GM10248 (cell line): ENCODE measurements at regions of chr17 and their contacts with region 1.

Region 1: DNA sequence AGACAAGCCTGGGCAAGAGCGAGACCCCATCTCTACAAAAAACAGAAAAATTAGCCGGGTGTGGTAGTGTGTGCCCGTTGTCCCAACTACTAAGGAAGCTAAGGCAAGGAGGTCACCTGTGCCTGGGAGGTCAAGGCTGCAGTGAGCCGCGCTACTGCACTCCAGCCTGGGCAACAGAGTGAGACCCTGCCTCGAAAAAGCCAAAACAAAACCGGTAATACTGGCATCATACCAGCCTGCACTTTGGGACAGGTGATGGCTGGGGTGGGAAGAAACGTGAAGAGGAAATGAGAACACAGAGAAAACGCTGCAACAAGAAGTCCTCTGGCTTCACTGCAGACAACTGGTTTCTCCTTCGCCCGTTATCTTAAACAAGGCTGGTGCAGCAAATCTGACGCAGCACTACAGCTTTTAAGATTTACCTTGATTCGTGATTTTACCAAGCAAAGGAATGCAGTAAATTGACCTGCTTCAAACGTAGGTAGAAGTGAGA is 725 bp upstream of the CASC3 start:
- DNase-seq: no peak
- CTCF ChIP-seq: no peak

Region 2: DNA sequence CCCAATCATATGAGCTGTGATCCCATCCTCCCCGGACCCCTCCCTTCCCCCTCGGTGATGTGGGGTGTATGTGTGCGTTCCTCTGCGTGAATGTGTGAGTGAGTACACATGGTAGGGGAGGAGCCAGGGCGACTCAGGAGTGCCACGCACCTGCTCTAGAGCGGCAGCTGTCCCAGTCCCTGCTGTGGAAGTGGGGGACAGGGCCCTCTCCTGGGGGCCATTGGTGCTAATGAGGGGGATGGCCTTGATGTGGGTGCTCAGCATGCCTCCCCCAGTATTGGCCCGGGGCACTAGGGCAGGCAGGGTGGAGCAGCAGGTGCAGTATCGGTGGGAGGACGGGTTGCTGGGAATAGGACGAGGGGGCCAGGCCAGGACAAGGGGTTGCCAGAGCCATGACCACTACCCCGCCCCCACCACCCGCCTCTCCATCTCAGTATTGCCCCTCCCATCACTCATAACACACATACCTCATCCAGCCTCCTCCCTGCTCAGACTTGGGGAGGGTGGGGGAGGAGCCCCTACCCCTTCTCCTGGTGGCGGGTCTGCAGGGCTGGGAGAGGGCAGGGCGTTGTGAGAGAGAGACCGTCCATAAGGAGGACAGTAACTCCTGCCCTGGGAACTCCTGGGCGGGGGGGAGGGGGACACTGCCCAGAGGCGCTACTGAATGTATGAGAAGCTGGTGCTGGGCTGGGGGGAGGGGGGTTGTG is 47.8 kb before region 1 on chr17:
- CTCF ChIA-PET with region 1: no interaction called
- POLR2A ChIA-PET with region 1: no interaction called
- DNase-seq: no peak
- CTCF ChIP-seq: no peak

Region 3: DNA sequence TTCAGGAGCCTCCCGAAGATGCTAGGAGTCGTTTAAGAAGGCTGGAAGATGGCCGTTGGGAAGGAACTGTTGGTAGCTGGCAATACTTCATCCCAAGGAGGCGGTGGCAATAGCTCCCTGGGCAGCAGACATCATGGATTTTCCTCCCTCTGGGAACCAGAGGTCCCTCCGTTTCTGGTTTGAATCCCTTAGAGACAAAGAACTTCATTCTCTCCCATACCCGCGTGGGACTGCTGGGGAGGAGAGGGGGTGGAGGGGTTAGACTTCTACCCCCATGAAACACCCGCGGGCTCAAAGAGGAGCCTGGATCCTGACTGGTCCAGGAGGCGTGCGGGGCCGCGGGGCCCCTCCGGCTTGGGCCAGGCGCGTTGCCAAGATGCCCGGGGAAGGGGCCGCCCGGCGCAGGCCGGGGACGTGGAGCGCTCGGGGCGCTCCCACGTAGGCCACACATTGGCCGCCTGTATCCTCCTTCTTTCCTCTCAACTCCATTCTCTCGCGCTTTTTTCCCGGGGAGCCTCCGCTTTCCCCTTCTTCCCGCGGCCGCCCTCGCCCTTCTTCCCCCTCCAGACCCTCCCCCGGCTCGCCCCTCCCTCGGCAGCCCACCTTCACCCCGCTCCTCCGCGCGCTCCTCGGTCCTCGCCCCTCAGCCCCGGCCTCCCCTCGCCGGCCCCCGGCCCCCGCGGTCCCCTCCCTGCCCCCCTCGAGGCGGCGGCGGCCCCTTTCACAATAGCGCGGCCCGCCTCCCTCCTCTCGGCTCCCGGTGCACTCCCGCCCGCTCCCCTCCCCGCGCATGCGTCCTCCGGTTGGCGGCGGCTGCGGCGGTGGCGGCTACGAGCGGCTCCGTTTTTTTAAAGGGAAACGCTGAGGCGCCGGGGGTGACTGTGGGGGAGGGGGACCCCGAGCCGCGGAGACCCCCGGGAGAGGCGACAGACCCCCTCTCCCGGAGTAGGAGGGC is 18.2 kb before region 1 on chr17 and contains the start of gene MSL1:
- CTCF ChIA-PET with region 1: interaction called, 23 read pairs
- POLR2A ChIA-PET with region 1: interaction called, 11 read pairs
- DNase-seq: peak; percentile 94
- CTCF ChIP-seq: no peak

Region 4: GRCh38 chr17:40198576-40198975 is 59.0 kb after region 1 on chr17:
- CTCF ChIA-PET with region 1: no interaction called
- POLR2A ChIA-PET with region 1: no interaction called
- DNase-seq: no peak
- CTCF ChIP-seq: no peak